PC-3 (cell line): ENCODE measurements at regions of chr12 and their contacts with region 1.

Region 1: GRCh38 chr12:105611340-105611739 is 280.8 kb downstream of the C12orf75 start:
- DNase-seq: no peak
- ATAC-seq: no peak
- H3K4me3 ChIP-seq: no peak overlapping the region
- H3K27ac ChIP-seq: no peak overlapping the region
- H3K4me1 ChIP-seq: no peaks in the 10 kb centered on the region
- H3K27me3 ChIP-seq: 0 out of 2 replicates have a peak, but pooled peaks cover 4% of the 10 kb centered on the region
- CTCF ChIP-seq: no peak

Region 2: DNA sequence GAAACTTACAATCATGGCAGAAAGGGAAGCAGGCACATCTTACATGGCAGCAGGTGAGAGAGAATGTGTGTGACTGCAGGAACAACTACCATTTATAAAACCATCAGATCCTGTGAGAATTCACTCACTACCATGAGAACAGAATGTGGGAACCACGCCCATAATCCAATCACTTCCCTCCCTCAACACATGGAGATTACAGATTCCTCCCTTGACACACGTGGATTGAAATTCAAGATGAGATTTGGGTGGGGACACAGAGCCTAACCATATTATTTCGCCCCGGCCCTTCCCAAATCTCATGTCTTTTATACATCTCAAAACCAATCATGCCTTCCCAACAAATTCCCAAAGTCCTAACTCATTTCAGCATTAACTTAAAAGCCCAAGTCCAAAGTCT is 77.3 kb before region 1 on chr12:
- CTCF ChIA-PET with region 1: no interaction called
- POLR2A ChIA-PET with region 1: no interaction called
- intact Hi-C with region 1: no loop called
- DNase-seq: no peak
- ATAC-seq: no peak
- H3K4me3 ChIP-seq: no peak overlapping the region
- H3K27ac ChIP-seq: no peak overlapping the region
- H3K4me1 ChIP-seq: no peaks in the 10 kb centered on the region
- H3K27me3 ChIP-seq: no peaks in the 10 kb centered on the region
- CTCF ChIP-seq: no peak

Region 3: GRCh38 chr12:105659355-105660075 is 48.2 kb after region 1 on chr12:
- CTCF ChIA-PET with region 1: no interaction called
- POLR2A ChIA-PET with region 1: no interaction called
- intact Hi-C with region 1: no loop called
- DNase-seq: peak; percentile 32
- ATAC-seq: no peak
- H3K4me3 ChIP-seq: no peak overlapping the region
- H3K27ac ChIP-seq: no peak overlapping the region
- H3K4me1 ChIP-seq: no peaks in the 10 kb centered on the region
- H3K27me3 ChIP-seq: peaks cover 11% of the 10 kb centered on the region; the same call in 1 of the 2 replicates
- CTCF ChIP-seq: no peak

Region 4: GRCh38 chr12:106223485-106224354 is 612.4 kb after region 1 on chr12:
- CTCF ChIA-PET with region 1: no interaction called
- POLR2A ChIA-PET with region 1: no interaction called
- intact Hi-C with region 1: no loop called
- DNase-seq: peak; percentile 89
- ATAC-seq: peak; percentile 80
- H3K4me3 ChIP-seq: no peak overlapping the region
- H3K27ac ChIP-seq: no peak overlapping the region
- H3K4me1 ChIP-seq: peaks cover 11% of the 10 kb centered on the region
- H3K27me3 ChIP-seq: no peaks in the 10 kb centered on the region
- CTCF ChIP-seq: peak; percentile 94

Region 5: GRCh38 chr12:106239241-106239950 is 628.1 kb after region 1 on chr12:
- CTCF ChIA-PET with region 1: no interaction called
- POLR2A ChIA-PET with region 1: interaction called, 17 read pairs
- intact Hi-C with region 1: no loop called
- DNase-seq: no peak
- ATAC-seq: no peak
- H3K4me3 ChIP-seq: no peak overlapping the region
- H3K27ac ChIP-seq: no peak overlapping the region
- H3K4me1 ChIP-seq: no peaks in the 10 kb centered on the region
- H3K27me3 ChIP-seq: no peaks in the 10 kb centered on the region
- CTCF ChIP-seq: no peak